Activated CD8-positive, alpha-beta memory T cell treated with anti-CD3 and anti-CD28 coated beads, Interleukin-2, amount 10 ng/mL, durations not matched to agents 7 days and 5 days (primary cell): ENCODE measurements at regions of chr5 and their contacts with region 1.

Region 1: GRCh38 chr5:173573126-173573960 is 43.1 kb downstream of the BOD1 start:
- DNase-seq: peak; percentile 65
- ATAC-seq: peak; percentile 74
- H3K4me3 Mint-ChIP-seq: no peak overlapping the region
- H3K27ac Mint-ChIP-seq: no peak overlapping the region
- H3K4me1 Mint-ChIP-seq: no peaks in the 10 kb centered on the region
- H3K27me3 Mint-ChIP-seq: peaks cover 13% of the 10 kb centered on the region

Region 2: DNA sequence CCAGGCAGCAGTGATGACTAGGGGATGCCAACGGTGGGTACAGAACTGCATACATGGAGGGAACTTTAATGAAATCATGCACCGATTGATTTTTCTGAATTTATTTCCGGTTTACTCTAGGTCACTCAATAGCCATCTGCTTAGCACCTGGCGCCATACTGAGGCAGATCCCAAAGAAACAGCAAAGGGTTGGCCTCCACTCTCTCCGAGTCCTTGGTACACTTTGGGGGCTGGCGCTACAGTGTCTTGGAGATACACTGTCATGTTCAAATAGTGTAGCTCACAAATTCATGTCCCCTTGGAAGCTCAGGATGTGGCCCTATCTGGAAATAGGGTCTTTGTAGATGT is 73.2 kb before region 1 on chr5:
- CTCF ChIA-PET with region 1: no interaction called
- DNase-seq: no peak
- ATAC-seq: no peak
- H3K4me3 Mint-ChIP-seq: no peak overlapping the region
- H3K27ac Mint-ChIP-seq: no peak overlapping the region
- H3K4me1 Mint-ChIP-seq: no peaks in the 10 kb centered on the region
- H3K27me3 Mint-ChIP-seq: no peaks in the 10 kb centered on the region

Region 3: DNA sequence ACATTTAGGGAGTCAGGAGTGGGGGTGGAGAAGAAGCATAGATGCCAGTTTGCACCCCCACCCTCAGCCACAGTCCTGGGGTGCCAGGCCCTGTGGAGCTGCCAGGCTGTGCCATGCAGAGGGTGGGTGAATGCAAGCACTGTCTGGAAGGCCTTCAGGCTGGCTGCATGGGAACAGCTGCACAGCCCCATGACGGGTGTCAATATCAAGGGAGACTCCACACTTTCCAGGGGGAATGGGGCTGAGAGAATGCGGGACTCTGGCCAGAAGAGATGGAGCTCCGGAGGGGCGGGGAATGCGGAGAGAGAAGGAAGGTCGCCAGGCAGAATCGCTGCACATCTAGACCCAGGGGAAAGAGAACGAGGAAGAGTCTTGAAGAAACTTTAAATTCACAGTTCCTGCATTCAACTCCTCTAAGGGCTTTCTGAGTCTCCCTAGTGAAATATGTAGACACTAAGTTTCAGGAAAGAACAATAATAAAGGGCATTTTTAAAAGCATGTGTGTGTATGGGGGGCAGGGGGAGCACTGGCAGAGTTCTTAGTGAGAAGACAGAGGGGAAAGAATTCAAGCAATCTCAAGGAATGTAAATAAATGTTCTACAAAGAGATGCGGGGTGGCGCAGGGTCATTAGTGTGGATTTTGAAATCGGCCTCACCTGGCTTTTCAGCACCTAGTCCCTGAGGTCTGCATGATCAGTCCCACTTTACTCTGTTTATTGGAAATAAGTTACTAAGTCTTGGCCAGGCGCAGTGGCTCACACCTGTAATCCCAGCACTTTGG is 16.0 kb before region 1 on chr5:
- CTCF ChIA-PET with region 1: interaction called, 10 read pairs
- DNase-seq: no peak
- ATAC-seq: no peak
- H3K4me3 Mint-ChIP-seq: no peak overlapping the region
- H3K27ac Mint-ChIP-seq: no peak overlapping the region
- H3K4me1 Mint-ChIP-seq: no peaks in the 10 kb centered on the region
- H3K27me3 Mint-ChIP-seq: peaks cover 15% of the 10 kb centered on the region